ENCODE measurements at regions of chr4 and their contacts with region 1.

Region 1: GRCh38 chr4:186889876-186890643 is 166.4 kb upstream of the FAT1 start:
- DNase-seq: no peak
- ATAC-seq: no peak
- H3K4me3 ChIP-seq: no peak overlapping the region
- H3K27ac ChIP-seq: no peak overlapping the region
- H3K4me1 ChIP-seq: no peaks in the 10 kb centered on the region
- H3K27me3 ChIP-seq: no peaks in the 10 kb centered on the region
- CTCF ChIP-seq: no peak
- POLR2A ChIP-seq: no peak

Region 2: DNA sequence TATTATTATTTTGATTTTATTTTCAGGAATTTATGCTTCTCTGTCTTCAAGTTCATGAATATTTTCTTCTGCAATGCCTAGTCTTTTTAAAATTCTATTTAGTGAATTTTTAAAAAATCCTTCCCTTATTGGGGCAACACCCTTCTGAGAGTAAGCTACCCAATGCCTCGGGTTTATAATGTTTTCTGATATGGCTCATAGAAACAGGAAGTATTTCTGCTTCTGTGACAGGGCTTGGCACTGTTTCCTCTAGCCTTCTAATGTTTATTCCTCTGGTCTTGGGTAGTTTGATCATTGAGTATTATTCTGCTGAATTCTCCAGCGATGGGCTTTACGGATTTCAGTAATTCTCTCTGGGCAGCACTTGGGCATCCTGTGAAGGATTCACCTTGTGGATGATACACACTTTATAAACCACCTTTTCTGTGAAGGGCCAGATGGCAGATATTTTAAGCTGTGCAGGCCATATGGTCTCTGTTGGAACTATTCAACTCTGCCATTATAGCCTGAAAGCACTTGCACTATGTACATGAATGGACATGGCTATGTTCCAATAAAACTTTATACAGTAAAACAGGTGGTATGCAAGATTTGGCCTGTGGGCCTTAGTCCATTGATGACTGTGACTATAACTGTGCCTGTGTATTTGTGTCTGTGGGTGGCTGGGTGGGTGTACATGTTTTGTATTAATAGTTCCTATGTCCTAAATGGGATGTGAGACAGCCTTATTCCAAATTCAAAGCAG is 70.5 kb before region 1 on chr4:
- intact Hi-C with region 1: loop called in 1 of 2 experiments (anchors 10 kb)
- DNase-seq: no peak
- ATAC-seq: no peak
- H3K4me3 ChIP-seq: no peak overlapping the region
- H3K27ac ChIP-seq: no peak overlapping the region
- H3K4me1 ChIP-seq: no peaks in the 10 kb centered on the region
- H3K27me3 ChIP-seq: no peaks in the 10 kb centered on the region
- CTCF ChIP-seq: no peak
- POLR2A ChIP-seq: no peak